Head of caudate nucleus (tissue), 42 donors: ENCODE measurements at regions of chr17 and their contacts with region 1.

Region 1: GRCh38 chr17:43994272-43995149 is 9.9 kb upstream of the NAGS start:
- DNase-seq: peak; percentile 59 to 90 (median 78)

Region 2: DNA sequence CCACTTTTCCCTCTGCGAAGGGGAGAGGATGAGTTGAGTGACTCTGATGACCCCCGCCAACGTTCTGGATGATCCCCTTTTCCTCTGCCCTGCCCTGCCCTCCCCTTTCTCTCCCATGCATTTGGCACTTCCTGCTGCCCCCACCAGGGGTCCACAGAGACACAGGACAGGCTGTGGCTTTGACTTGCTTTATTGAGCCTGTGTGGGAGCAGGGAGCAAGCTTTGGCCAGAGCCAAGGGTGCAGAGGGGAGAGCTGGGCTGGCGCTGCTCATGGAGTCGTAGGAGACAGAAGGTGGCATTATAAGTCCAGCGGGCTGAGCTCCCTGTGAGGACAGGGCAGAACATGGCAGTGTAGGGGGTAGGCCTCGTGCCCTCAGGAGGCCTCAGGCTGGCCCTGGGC is 53.9 kb before region 1 on chr17:
- intact Hi-C with region 1: loop called (anchors 10 kb)
- DNase-seq: peak in 3 of 42 donors; percentile 10 to 36 (median 16)